Mammary epithelial cell (primary cell): ENCODE measurements at regions of chr2 and their contacts with region 1.

Region 1: DNA sequence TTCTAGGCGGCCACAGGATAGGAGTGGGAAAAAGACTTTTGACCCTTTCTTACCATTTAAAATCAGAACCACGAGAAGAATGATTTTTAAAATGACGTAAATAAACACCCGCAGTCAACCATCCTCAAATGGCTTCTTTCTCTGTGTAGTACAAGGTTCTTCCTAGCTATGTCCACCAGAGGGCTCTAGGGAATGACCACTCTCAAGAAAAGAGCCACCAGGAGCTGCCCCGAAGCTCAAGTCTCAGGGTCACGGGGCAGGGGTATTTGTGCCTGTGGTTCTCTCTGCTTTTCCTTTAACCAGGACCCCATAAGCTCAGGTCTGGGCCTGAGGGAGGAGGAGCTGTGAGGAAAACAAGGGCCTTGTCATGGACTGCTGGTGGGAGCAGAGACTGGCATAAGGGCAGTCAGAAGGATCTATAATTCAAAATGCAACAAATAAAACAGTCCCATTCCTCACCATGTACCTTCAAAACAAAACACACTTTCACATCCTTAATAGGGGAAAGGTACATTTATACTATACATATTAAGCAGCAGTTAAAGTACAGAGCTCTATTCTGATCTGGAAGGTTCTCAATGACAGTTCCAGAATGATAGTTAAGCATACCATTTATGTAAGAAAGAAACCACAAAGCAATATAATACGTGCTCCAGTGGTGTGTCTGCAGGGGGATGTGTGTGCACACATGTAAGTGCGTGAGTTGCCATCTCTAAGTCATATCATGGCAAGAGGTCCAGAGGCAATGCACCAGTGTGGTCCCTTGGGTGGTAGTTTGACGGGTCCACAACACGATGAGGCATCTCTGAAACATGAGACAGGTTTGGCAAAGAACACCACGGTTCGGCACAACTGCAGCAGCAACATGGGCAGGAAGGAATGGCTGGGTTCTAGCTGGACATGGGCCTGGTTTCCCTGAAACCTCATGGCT is 18.6 kb downstream of the LYPD1 start:
- DNase-seq: no peak
- H3K4me3 ChIP-seq: no peak overlapping the region
- H3K27ac ChIP-seq: no peak overlapping the region
- H3K4me1 ChIP-seq: no peaks in the 10 kb centered on the region
- H3K27me3 ChIP-seq: no peaks in the 10 kb centered on the region
- CTCF ChIP-seq: no peak

Region 2: GRCh38 chr2:132701810-132702209 is 50.4 kb after region 1 on chr2:
- CTCF ChIA-PET with region 1: interaction called, 17 read pairs
- dilution Hi-C with region 1: no loop called
- in situ Hi-C with region 1: no loop called
- intact Hi-C with region 1: no loop called
- DNase-seq: peak; percentile 46
- H3K4me3 ChIP-seq: no peak overlapping the region
- H3K27ac ChIP-seq: no peak overlapping the region
- H3K4me1 ChIP-seq: no peaks in the 10 kb centered on the region
- H3K27me3 ChIP-seq: peaks cover 2% of the 10 kb centered on the region
- CTCF ChIP-seq: no peak